ENCODE measurements at regions of chr3 and their contacts with region 1.

Region 1: GRCh38 chr3:49171119-49171774 is at the start of gene KLHDC8B:
- DNase-seq: peak; percentile 88
- H3K4me3 ChIP-seq: peak within 1 kb of the TSS; percentile 66 to 72
- H3K27ac ChIP-seq: peak within 1 kb of the TSS; percentile 80 to 89
- H3K4me1 ChIP-seq: peaks cover 5 to 20% of the 10 kb centered on the region in 2 donors
- H3K27me3 ChIP-seq: no peaks in the 10 kb centered on the region
- CTCF ChIP-seq: peak; percentile 92 to 95 (median 92)
- POLR2A ChIP-seq: peak; percentile 57 to 73
- total RNA-seq, gene KLHDC8B: 7.7 to 67.6 (median 39.4) TPM

Region 2: GRCh38 chr3:49276475-49277382 is 105.5 kb after region 1 on chr3 and contains the start of gene C3orf62:
- intact Hi-C with region 1: loop called (anchors 10 kb)
- DNase-seq: peak; percentile 91 to 92
- H3K4me3 ChIP-seq: peak within 1 kb of the TSS; percentile 48 to 50
- H3K27ac ChIP-seq: peak within 1 kb of the TSS; percentile 97 to 98
- H3K4me1 ChIP-seq: peaks cover 0 to 9% of the 10 kb centered on the region in 2 donors
- H3K27me3 ChIP-seq: no peaks in the 10 kb centered on the region
- CTCF ChIP-seq: no peak
- POLR2A ChIP-seq: peak in 1 of 2 donors; percentile 57
- total RNA-seq, gene C3orf62: 1.5 to 9.0 (median 4.9) TPM

Region 3: DNA sequence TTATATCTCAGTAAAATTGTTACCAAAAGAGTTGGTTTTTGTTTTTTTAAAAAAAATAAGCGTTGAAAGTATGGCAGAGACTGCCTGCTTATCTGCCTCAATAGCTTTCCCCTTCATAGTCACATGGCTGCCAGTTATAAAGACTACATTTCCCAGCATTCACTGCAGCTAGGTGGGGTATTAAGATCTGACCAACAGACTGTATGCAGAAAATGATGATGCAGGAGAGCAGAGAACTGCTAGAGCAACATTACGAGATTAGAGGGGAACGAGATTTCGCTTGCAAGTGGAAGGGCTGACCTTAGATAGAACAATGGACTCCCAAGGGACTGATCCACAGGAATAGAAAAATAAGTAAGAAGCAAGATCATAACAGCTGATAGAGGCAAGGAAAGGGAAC is 226.2 kb after region 1 on chr3:
- intact Hi-C with region 1: no loop called
- DNase-seq: no peak
- H3K4me3 ChIP-seq: no peak overlapping the region
- H3K27ac ChIP-seq: peak overlapping the region in 1 of 2 donors; percentile 18
- H3K4me1 ChIP-seq: peaks cover 0 to 7% of the 10 kb centered on the region in 2 donors
- H3K27me3 ChIP-seq: no peaks in the 10 kb centered on the region
- CTCF ChIP-seq: no peak
- POLR2A ChIP-seq: peak in 1 of 2 donors; percentile 13

Region 4: GRCh38 chr3:49445381-49445780 is 274.1 kb after region 1 on chr3:
- intact Hi-C with region 1: loop called (anchors 10 kb)
- DNase-seq: no peak
- H3K4me3 ChIP-seq: no peak overlapping the region
- H3K27ac ChIP-seq: no peak overlapping the region
- H3K4me1 ChIP-seq: peaks cover 0 to 4% of the 10 kb centered on the region in 2 donors
- H3K27me3 ChIP-seq: no peaks in the 10 kb centered on the region
- CTCF ChIP-seq: no peak
- POLR2A ChIP-seq: no peak